HepG2 (cell line): ENCODE measurements at regions of chr22 and their contacts with region 1.

Region 1: GRCh38 chr22:35430897-35431322 is 31.0 kb downstream of the MCM5 start:
- DNase-seq: peak; percentile 55
- ATAC-seq: peak; percentile 94
- H3K4me3 ChIP-seq: no peak overlapping the region
- H3K27ac ChIP-seq: no peak overlapping the region
- H3K4me1 ChIP-seq: no peaks in the 10 kb centered on the region
- H3K27me3 ChIP-seq: no peaks in the 10 kb centered on the region
- CTCF ChIP-seq: peak; percentile 88
- EP300 ChIP-seq: no peak
- POLR2A ChIP-seq: no peak
- RAD21 ChIP-seq: peak; percentile 96

Region 2: GRCh38 chr22:35399678-35400334 is 31.1 kb before region 1 on chr22 and contains the start of gene MCM5:
- CTCF ChIA-PET with region 1: no interaction called
- POLR2A ChIA-PET with region 1: no interaction called
- in situ Hi-C with region 1: no loop called
- intact Hi-C with region 1: no loop called
- DNase-seq: peak; percentile 94
- ATAC-seq: peak; percentile 94
- H3K4me3 ChIP-seq: peak within 1 kb of the TSS; percentile 88 to 97 (median 89)
- H3K27ac ChIP-seq: peak within 1 kb of the TSS; percentile 88
- H3K4me1 ChIP-seq: peaks cover 73% of the 10 kb centered on the region
- H3K27me3 ChIP-seq: no peaks in the 10 kb centered on the region
- CTCF ChIP-seq: no peak
- EP300 ChIP-seq: no peak
- POLR2A ChIP-seq: peak; percentile 53 to 70
- RAD21 ChIP-seq: no peak
- total RNA-seq, gene MCM5: 87.1 and 93.5 TPM in 2 replicates

Region 3: GRCh38 chr22:35582861-35583670 is 152.2 kb after region 1 on chr22:
- CTCF ChIA-PET with region 1: interaction called, 32 read pairs
- POLR2A ChIA-PET with region 1: no interaction called
- in situ Hi-C with region 1: loop called (anchors 5 kb)
- intact Hi-C with region 1: loop called (anchors 1 kb)
- DNase-seq: peak; percentile 59
- ATAC-seq: peak; percentile 87
- H3K4me3 ChIP-seq: no peak overlapping the region
- H3K27ac ChIP-seq: no peak overlapping the region
- H3K4me1 ChIP-seq: no peaks in the 10 kb centered on the region
- H3K27me3 ChIP-seq: peaks cover 0 to 7% of the 10 kb centered on the region in 2 experiments; a peak in 1 of 5 replicates
- CTCF ChIP-seq: peak; percentile 92
- EP300 ChIP-seq: no peak
- POLR2A ChIP-seq: no peak
- RAD21 ChIP-seq: peak; percentile 85

Region 4: DNA sequence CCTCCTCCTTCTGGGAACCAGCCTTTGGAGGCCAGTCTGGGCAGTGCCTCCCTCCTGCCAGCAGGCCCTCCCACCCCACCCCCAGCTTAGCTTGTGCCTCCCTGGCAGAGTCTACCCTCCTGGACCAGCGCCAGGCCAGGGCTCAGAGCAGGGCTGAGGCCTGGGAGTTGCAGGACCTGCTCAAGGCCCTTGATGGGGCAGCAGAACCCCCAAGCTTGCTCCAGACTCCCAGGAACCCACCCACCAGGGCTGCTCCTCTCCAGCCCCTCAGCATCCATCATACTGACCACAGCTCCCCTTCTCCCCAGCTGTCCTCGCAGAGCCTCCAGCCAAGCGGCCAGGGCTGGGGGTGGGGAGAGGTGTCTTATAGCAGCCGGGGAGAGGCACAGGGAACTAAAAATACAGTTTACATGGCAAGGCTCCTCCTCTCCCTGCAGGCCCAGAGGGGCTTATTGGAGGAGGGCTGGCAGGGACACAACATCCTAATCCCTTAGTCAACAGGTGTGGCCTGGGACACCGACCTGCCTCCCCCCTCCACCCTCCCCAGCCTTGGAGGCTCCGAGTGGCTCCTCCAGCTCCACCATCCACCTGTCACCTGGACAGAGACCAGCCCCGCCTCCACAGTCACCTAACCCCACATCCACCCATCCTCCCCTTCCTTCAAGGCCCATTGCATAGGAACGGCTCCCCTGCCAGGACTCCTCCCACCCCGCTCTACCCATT is 191.4 kb after region 1 on chr22:
- CTCF ChIA-PET with region 1: interaction called, 8 read pairs
- POLR2A ChIA-PET with region 1: no interaction called
- in situ Hi-C with region 1: no loop called
- intact Hi-C with region 1: loop called (anchors 5 kb)
- DNase-seq: no peak
- ATAC-seq: no peak
- H3K4me3 ChIP-seq: no peak overlapping the region
- H3K27ac ChIP-seq: no peak overlapping the region
- H3K4me1 ChIP-seq: peaks cover 24% of the 10 kb centered on the region
- H3K27me3 ChIP-seq: peaks cover 0 to 27% of the 10 kb centered on the region in 2 experiments; a peak in 2 of 5 replicates
- CTCF ChIP-seq: no peak
- EP300 ChIP-seq: no peak
- POLR2A ChIP-seq: no peak
- RAD21 ChIP-seq: no peak

Region 5: DNA sequence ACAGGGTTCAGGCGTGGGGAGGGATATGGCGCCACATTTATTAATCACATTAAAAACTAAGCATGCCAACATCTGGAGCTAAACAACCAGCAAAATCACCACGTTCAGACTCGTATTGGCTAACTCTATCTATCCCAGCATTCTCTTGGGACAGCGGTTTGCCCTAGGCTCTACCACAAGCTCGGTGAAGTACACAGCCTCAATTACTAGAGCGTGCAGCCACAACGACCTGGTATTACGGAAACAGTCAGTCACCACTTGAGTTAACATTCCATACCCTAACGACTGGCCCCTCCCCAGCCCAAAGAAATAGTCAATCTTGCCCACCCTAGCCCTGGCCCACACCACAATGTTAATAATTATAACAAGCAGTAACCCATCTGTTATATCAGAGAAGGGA is 318.9 kb after region 1 on chr22:
- CTCF ChIA-PET with region 1: no interaction called
- POLR2A ChIA-PET with region 1: no interaction called
- in situ Hi-C with region 1: loop called (anchors 25 kb)
- intact Hi-C with region 1: no loop called
- DNase-seq: no peak
- ATAC-seq: no peak
- H3K4me3 ChIP-seq: no peak overlapping the region
- H3K27ac ChIP-seq: no peak overlapping the region
- H3K4me1 ChIP-seq: peaks cover 5% of the 10 kb centered on the region; the same call in 1 of the 2 replicates
- H3K27me3 ChIP-seq: no peaks in the 10 kb centered on the region
- CTCF ChIP-seq: no peak
- EP300 ChIP-seq: no peak
- POLR2A ChIP-seq: no peak
- RAD21 ChIP-seq: no peak